Activated B cell treated with CpG ODN at 0.5 μM for 24 hours (primary cell): ENCODE measurements at regions of chr11 and their contacts with region 1.

Region 1: DNA sequence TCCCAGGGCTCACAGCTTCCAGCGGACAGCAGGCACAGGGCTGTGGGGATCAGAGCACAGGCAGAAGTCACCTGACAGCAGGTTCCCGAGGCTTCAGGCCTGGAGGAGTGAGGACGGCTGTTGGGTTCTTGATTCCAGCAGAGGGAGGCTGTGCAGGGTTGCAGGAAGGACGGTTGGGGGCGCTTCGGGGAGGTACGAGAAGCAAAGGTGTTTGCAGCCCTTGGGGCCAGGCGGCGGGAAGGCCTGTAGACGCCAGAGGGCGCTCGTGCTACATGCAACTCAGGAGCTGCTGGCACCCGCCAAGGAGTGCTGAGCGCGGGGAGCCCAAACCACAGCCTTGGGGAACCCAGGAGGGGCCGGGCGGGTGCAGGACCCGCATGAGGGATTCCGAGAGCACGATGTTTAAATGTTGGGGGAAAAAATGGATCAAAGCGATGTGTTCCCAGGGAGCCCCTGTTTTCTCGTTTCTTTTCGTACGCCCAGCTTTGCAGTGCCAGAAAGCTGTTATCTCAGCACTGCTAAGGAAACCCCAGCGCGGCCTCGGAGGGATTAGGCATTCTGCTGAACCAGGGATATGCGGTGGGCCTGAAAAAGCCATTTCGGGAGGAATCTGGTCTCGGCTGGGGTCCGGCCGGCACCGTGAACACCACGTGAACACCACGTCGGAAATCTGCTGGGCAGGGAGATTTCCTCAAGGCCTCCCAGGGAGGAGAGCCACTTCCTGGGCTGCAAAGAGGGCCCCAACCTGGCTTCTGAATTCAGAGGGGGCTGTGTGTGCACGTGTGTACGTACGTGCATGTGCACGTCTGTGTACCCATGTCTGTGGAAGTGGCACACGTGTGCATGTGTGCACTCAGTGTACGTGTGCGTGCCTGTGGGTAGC is 88.1 kb downstream of the KCNQ1 start:
- DNase-seq: peak; percentile 89
- ATAC-seq: peak; percentile 88
- H3K4me3 Mint-ChIP-seq: peak overlapping the region; percentile 64
- H3K27ac Mint-ChIP-seq: no peak overlapping the region
- H3K4me1 Mint-ChIP-seq: peaks cover 19% of the 10 kb centered on the region
- H3K27me3 Mint-ChIP-seq: peaks cover 2% of the 10 kb centered on the region
- CTCF ChIP-seq: no peak

Region 2: GRCh38 chr11:2305140-2305840 is 227.7 kb before region 1 on chr11:
- CTCF ChIA-PET with region 1: interaction called, 6 read pairs
- POLR2A ChIA-PET with region 1: no interaction called
- intact Hi-C with region 1: loop called (anchors 1 kb)
- DNase-seq: peak; percentile 82
- ATAC-seq: peak; percentile 59
- H3K4me3 Mint-ChIP-seq: peak overlapping the region; percentile 32
- H3K27ac Mint-ChIP-seq: peak overlapping the region; percentile 18
- H3K4me1 Mint-ChIP-seq: peaks cover 60% of the 10 kb centered on the region
- H3K27me3 Mint-ChIP-seq: no peaks in the 10 kb centered on the region
- CTCF ChIP-seq: no peak

Region 3: GRCh38 chr11:2428322-2428795 is 104.6 kb before region 1 on chr11:
- CTCF ChIA-PET with region 1: interaction called, 102 read pairs
- POLR2A ChIA-PET with region 1: no interaction called
- intact Hi-C with region 1: loop called (anchors 1 kb)
- DNase-seq: peak; percentile 76
- ATAC-seq: peak; percentile 97
- H3K4me3 Mint-ChIP-seq: no peak overlapping the region
- H3K27ac Mint-ChIP-seq: no peak overlapping the region
- H3K4me1 Mint-ChIP-seq: no peaks in the 10 kb centered on the region
- H3K27me3 Mint-ChIP-seq: no peaks in the 10 kb centered on the region
- CTCF ChIP-seq: peak; percentile 57

Region 4: GRCh38 chr11:2885676-2886081 is 352.7 kb after region 1 on chr11 and contains the start of gene CDKN1C:
- CTCF ChIA-PET with region 1: interaction called, 334 read pairs
- POLR2A ChIA-PET with region 1: interaction called, 24 read pairs
- intact Hi-C with region 1: loop called (anchors 1 kb)
- DNase-seq: peak; percentile 77
- ATAC-seq: peak; percentile 90
- H3K4me3 Mint-ChIP-seq: peak within 1 kb of the TSS; percentile 90
- H3K27ac Mint-ChIP-seq: no peak within 1 kb of the TSS
- H3K4me1 Mint-ChIP-seq: peaks cover 9% of the 10 kb centered on the region
- H3K27me3 Mint-ChIP-seq: peaks cover 9% of the 10 kb centered on the region
- CTCF ChIP-seq: no peak
- total RNA-seq, gene CDKN1C: 1.1 and 1.4 TPM in 2 replicates

Region 5: DNA sequence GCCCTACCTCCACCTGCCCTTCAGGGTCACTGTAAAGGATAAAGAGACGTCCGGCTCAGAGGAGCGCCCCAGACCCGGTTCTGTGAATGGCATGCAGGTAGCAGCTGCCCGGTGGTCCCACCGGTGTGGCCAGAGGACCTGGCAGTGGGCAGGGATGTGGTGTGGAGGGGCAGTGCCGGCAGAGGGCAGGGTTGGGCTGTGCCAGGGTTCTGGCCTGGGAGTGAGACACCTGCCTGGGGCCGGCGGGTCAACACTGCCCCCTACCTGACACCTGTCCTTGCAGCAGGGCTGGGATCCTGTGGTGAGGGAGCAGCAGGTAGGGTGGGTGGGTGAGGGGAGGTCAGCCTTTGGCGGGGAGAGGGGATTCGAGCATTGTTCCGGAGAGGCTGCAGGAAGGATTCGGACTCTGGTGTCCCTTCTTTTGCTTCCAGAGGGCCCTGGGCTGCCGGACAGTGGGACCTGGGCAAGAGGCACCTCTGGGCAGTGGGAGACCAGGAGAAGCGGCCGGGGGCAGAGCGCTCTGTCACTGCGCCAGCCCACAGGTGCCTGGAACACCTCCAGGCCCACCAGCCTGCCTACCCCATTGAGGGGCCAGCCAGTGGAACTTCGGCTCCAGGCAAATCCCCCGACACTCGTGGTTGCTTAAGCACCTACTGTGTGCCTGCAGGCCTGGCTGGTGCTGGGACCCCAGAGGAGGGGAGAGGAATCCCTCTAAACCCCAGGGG is 397.9 kb after region 1 on chr11:
- CTCF ChIA-PET with region 1: interaction called, 13 read pairs
- POLR2A ChIA-PET with region 1: interaction called, 5 read pairs
- intact Hi-C with region 1: loop called (anchors 1 kb)
- DNase-seq: peak; percentile 40
- ATAC-seq: peak; percentile 44
- H3K4me3 Mint-ChIP-seq: peak overlapping the region; percentile 82
- H3K27ac Mint-ChIP-seq: no peak overlapping the region
- H3K4me1 Mint-ChIP-seq: peaks cover 15% of the 10 kb centered on the region
- H3K27me3 Mint-ChIP-seq: peaks cover 23% of the 10 kb centered on the region
- CTCF ChIP-seq: no peak

Region 6: DNA sequence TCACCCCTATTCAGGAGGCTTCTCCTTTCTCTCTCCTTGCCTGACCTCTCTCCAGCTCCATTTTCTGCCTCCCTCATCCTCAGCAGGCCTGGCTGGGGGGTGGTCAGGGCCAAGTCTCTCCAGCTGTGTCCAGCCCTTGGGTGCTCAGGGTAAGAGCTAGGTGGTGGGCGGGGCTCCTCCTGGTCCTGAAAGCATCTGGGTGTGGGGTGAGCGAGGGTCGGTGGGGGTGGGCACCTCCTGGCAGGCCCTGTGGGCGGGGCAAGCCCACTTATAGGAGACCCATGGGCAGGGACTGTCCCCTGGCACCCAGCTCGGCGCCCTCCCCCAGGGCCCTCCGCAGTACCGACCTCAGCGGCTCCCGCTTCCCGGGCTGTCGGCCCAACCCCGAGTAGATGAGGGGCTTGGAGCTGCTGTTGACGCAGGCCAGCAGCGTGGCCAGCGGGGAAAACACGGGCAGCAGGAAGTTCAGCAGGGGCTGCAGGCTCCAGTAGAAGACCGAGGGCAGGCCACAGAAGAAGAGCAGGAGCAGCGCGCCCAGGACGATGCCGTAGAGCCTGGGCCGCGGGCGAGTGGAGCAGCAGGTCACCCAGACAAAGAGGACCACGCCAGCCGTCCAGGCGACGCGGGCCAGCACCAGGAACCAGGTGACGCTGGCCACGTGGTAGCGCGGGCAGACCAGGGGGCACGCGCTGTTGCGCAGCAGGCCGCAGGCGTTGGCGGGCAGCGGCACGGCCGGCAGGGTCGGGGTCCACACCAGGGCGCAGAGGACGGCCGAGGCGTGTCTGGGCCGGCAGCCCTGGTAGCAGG is 684.9 kb after region 1 on chr11:
- CTCF ChIA-PET with region 1: interaction called, 3 read pairs
- POLR2A ChIA-PET with region 1: no interaction called
- intact Hi-C with region 1: loop called (anchors 2 kb)
- DNase-seq: peak; percentile 8
- ATAC-seq: no peak
- H3K4me3 Mint-ChIP-seq: no peak overlapping the region
- H3K27ac Mint-ChIP-seq: no peak overlapping the region
- H3K4me1 Mint-ChIP-seq: no peaks in the 10 kb centered on the region
- H3K27me3 Mint-ChIP-seq: peaks cover 15% of the 10 kb centered on the region
- CTCF ChIP-seq: no peak